ENCODE measurements at regions of chr17 and their contacts with region 1.

Region 1: GRCh38 chr17:77066165-77066564 is 74.6 kb upstream of the SEC14L1 start:
- DNase-seq: no peak
- H3K4me3 ChIP-seq: no peak overlapping the region
- H3K27ac ChIP-seq: no peak overlapping the region
- H3K4me1 ChIP-seq: peaks cover 0 to 2% (median 0%) of the 10 kb centered on the region in 4 experiments
- H3K27me3 ChIP-seq: peaks cover 0 to 4% (median 0%) of the 10 kb centered on the region in 5 experiments

Region 2: GRCh38 chr17:76868176-76868668 is 197.9 kb before region 1 on chr17 and contains the start of gene MGAT5B:
- CTCF ChIA-PET with region 1: interaction called, 18 read pairs
- POLR2A ChIA-PET with region 1: no interaction called
- DNase-seq: peak; percentile 71 to 83 (median 82)
- H3K4me3 ChIP-seq: peak within 1 kb of the TSS in 5 of 7 experiments; percentile 30 to 65 (median 48)
- H3K27ac ChIP-seq: no peak within 1 kb of the TSS
- H3K4me1 ChIP-seq: peaks cover 0 to 36% (median 22%) of the 10 kb centered on the region in 4 experiments
- H3K27me3 ChIP-seq: peaks cover 0 to 42% (median 22%) of the 10 kb centered on the region in 5 experiments

Region 3: GRCh38 chr17:76968707-76969597 is 97.2 kb before region 1 on chr17:
- CTCF ChIA-PET with region 1: no interaction called
- POLR2A ChIA-PET with region 1: no interaction called
- DNase-seq: peak; percentile 74 to 91 (median 87)
- H3K4me3 ChIP-seq: peak overlapping the region; percentile 31 to 80 (median 59)
- H3K27ac ChIP-seq: peak overlapping the region in 1 of 2 experiments; percentile 58
- H3K4me1 ChIP-seq: peaks cover 0 to 33% (median 25%) of the 10 kb centered on the region in 4 experiments
- H3K27me3 ChIP-seq: peaks cover 0 to 2% (median 0%) of the 10 kb centered on the region in 5 experiments

Region 4: GRCh38 chr17:76997981-76998531 is 68.1 kb before region 1 on chr17:
- CTCF ChIA-PET with region 1: no interaction called
- POLR2A ChIA-PET with region 1: no interaction called
- DNase-seq: peak; percentile 74 to 95 (median 93)
- H3K4me3 ChIP-seq: peak overlapping the region in 6 of 7 experiments; percentile 3 to 53 (median 20)
- H3K27ac ChIP-seq: peak overlapping the region; percentile 29 to 65
- H3K4me1 ChIP-seq: peaks cover 14 to 58% (median 53%) of the 10 kb centered on the region in 4 experiments
- H3K27me3 ChIP-seq: no peaks in the 10 kb centered on the region

Region 5: GRCh38 chr17:77079025-77079714 is 13.0 kb after region 1 on chr17:
- CTCF ChIA-PET with region 1: interaction called, 11 read pairs
- POLR2A ChIA-PET with region 1: interaction called, 3 read pairs
- DNase-seq: peak in 2 of 3 donors; percentile 43 to 49
- H3K4me3 ChIP-seq: no peak overlapping the region
- H3K27ac ChIP-seq: no peak overlapping the region
- H3K4me1 ChIP-seq: peaks cover 0 to 11% (median 8%) of the 10 kb centered on the region in 4 experiments
- H3K27me3 ChIP-seq: peaks cover 0 to 5% (median 0%) of the 10 kb centered on the region in 5 experiments

Measured in common myeloid progenitor, CD34-positive (primary cell).